Activated CD4-positive, alpha-beta memory T cell treated with anti-CD3 and anti-CD28 coated beads for 36 hours (primary cell): ENCODE measurements at regions of chr12 and their contacts with region 1.

Region 1: DNA sequence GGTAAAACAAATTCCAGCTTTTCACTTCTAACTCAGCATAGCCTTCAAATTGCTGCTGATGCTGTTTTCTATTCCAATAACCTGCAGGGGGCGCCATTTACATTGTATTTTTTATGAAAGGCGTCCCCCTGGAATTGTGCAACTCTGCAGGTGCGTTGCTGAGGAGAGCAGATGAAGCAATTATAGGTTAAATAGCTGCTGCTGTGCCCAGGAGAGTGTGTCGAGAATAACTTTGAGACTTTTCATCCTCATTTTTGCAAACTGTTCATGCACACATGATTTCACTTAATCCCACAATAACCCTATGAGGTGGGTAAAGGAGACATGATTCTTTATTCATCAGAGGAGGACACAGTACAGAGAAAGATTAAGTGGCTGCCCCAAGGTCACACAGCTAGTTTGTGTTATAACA is 75.7 kb downstream of the MYRFL start:
- DNase-seq: peak; percentile 69
- H3K4me3 Mint-ChIP-seq: no peak overlapping the region
- H3K27ac Mint-ChIP-seq: no peak overlapping the region
- H3K4me1 Mint-ChIP-seq: no peaks in the 10 kb centered on the region
- H3K27me3 Mint-ChIP-seq: no peaks in the 10 kb centered on the region

Region 2: GRCh38 chr12:69879041-69879960 is 21.4 kb before region 1 on chr12:
- CTCF ChIA-PET with region 1: interaction called, 13 read pairs
- POLR2A ChIA-PET with region 1: no interaction called
- intact Hi-C with region 1: no loop called
- DNase-seq: peak; percentile 72
- H3K4me3 Mint-ChIP-seq: peak overlapping the region; percentile 7
- H3K27ac Mint-ChIP-seq: no peak overlapping the region
- H3K4me1 Mint-ChIP-seq: peaks cover 7% of the 10 kb centered on the region
- H3K27me3 Mint-ChIP-seq: peaks cover 15% of the 10 kb centered on the region

Region 3: GRCh38 chr12:69885658-69886057 is 15.1 kb before region 1 on chr12:
- CTCF ChIA-PET with region 1: interaction called, 14 read pairs
- POLR2A ChIA-PET with region 1: no interaction called
- intact Hi-C with region 1: no loop called
- DNase-seq: no peak
- H3K4me3 Mint-ChIP-seq: no peak overlapping the region
- H3K27ac Mint-ChIP-seq: no peak overlapping the region
- H3K4me1 Mint-ChIP-seq: no peaks in the 10 kb centered on the region
- H3K27me3 Mint-ChIP-seq: peaks cover 1% of the 10 kb centered on the region

Region 4: DNA sequence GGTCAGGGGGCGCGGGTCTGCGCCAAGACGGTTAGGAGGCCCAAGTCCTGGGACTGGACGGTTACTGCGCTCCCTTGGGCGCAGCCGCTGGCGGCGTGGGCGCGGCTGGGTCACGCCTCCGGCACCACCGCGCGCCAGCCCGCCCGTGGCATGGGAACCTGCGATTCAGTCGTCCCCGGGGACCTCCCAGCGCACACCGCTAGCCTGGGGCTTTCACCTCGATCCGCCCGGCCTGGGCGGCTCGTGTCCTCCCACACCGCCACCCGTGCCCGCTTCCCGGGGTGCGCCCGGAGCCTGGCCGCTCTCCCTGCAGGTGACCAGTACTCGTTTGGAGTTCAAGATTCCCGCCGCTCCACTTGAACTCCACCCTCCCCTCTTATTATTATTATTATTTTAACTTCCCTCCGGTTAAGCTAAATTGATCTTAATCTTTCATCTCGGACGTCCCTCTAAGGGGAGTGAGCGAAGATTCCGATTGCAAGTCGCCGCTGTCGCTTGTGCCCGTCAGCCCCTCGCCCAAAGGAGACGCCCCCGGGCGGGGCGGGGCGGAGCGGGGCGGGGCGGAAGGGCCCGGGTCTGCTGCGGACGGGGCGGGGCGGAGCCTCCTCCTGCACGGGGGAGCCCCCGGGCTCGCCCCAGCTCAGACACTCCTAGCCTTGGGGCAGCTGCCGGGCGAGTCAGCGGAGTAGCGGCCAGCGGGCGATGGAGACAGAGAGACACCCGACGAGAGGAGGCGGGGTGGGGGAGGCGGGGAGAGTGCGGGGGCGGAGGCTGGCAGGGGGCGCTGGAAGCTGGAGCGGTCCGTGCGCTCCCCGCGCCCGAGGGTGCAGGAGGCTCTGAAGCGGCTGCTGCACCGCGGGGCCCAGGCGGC is 465.2 kb after region 1 on chr12 and contains the start of gene KCNMB4:
- CTCF ChIA-PET with region 1: no interaction called
- POLR2A ChIA-PET with region 1: no interaction called
- intact Hi-C with region 1: loop called (anchors 5 kb)
- DNase-seq: peak; percentile 83
- H3K4me3 Mint-ChIP-seq: peak within 1 kb of the TSS; percentile 90
- H3K27ac Mint-ChIP-seq: peak within 1 kb of the TSS; percentile 51
- H3K4me1 Mint-ChIP-seq: peaks cover 18% of the 10 kb centered on the region
- H3K27me3 Mint-ChIP-seq: peaks cover 5% of the 10 kb centered on the region
- total RNA-seq, gene KCNMB4: 1.3 to 1.5 TPM

Region 5: GRCh38 chr12:70418101-70418500 is 517.4 kb after region 1 on chr12:
- CTCF ChIA-PET with region 1: no interaction called
- POLR2A ChIA-PET with region 1: no interaction called
- intact Hi-C with region 1: no loop called
- DNase-seq: peak; percentile 11
- H3K4me3 Mint-ChIP-seq: no peak overlapping the region
- H3K27ac Mint-ChIP-seq: no peak overlapping the region
- H3K4me1 Mint-ChIP-seq: no peaks in the 10 kb centered on the region
- H3K27me3 Mint-ChIP-seq: no peaks in the 10 kb centered on the region

Region 6: DNA sequence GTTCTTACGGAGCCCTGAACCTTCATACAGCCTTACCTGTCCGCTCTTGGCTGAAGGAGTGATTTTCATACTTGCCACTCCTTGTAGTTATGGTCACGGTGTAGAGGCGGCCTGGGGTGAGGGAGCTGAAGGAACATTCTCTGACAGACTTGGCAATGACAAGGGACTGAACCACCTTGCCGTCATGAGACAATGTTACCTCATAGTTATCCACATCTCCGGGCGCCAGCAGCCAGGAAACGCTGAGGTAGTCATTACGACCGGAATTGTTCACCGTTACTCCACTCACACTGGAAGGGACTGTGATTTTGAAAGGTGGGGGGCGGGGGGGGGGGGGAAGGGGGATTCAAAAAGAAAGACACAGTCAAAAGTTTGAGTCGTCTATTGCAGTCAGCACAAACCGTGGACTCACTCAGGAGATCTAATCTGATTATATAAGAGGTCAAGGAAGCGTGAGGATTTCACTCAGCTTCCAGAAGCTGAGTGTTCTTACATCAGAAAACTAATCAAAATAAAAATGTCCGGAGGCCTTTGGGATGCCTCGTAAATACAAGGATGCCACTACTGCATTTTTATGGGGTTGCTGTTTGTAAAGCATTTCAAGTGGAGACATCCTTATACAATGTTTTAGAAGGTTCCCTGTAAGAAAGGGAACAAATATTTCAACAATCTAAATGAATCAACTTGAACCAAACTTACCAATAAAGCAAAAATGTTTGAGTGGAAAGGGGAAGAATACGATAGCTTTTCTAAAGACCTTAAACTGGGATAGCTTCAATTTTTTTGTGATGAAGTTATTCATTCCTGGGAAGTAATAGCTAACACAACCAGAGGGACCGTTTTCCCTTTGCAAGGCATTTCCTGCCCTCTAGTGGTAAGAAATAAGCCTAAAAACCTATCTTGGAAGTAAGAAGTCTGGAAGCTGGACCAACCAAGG is 675.9 kb after region 1 on chr12:
- CTCF ChIA-PET with region 1: interaction called, 57 read pairs
- POLR2A ChIA-PET with region 1: no interaction called
- intact Hi-C with region 1: loop called (anchors 1 kb)
- DNase-seq: no peak
- H3K4me3 Mint-ChIP-seq: no peak overlapping the region
- H3K27ac Mint-ChIP-seq: no peak overlapping the region
- H3K4me1 Mint-ChIP-seq: no peaks in the 10 kb centered on the region
- H3K27me3 Mint-ChIP-seq: peaks cover 5% of the 10 kb centered on the region

Region 7: GRCh38 chr12:70719672-70720420 is 819.1 kb after region 1 on chr12:
- CTCF ChIA-PET with region 1: interaction called, 6 read pairs
- POLR2A ChIA-PET with region 1: no interaction called
- intact Hi-C with region 1: loop called (anchors 2 kb)
- DNase-seq: peak; percentile 22
- H3K4me3 Mint-ChIP-seq: no peak overlapping the region
- H3K27ac Mint-ChIP-seq: no peak overlapping the region
- H3K4me1 Mint-ChIP-seq: peaks cover 5% of the 10 kb centered on the region
- H3K27me3 Mint-ChIP-seq: peaks cover 7% of the 10 kb centered on the region